Astrocyte of the cerebellum (primary cell): ENCODE measurements at regions of chr11 and their contacts with region 1.

Region 1: DNA sequence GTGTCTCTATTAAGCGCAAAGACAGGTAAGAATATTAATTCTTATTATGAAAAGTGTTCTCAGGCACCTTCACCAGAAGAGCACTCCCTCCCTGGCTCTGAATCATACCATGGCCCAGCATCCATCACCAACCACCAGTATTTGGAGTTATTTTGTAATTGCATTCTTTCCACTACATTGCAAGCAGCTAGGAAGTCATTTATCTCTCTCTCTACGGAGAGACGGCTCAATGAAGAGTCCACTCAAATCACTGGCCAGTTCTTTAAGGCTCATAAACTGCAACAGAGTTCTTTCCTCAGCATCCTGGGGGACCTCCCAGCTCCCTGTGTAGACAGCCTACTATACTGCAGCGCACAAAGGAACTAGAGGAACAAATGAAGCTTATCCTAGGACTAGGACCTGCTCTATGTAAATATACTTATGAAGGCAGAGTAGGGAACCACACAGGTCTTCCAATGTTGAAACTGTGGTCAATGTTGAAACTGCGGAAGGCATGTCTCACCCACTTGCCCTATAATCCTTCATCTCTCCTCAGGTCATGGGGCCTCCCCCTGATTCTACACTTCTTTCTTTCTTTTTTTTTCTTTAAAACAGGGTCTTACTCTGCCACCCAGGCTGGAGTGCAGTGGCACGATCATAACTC is 63.4 kb downstream of the AAMDC start:
- DNase-seq: peak; percentile 27
- H3K4me3 ChIP-seq: no peak overlapping the region
- CTCF ChIP-seq: no peak

Region 2: GRCh38 chr11:77813256-77813655 is 71.1 kb before region 1 on chr11:
- in situ Hi-C with region 1: loop called (anchors 5 kb)
- DNase-seq: peak; percentile 32
- H3K4me3 ChIP-seq: no peak overlapping the region
- CTCF ChIP-seq: no peak

Region 3: GRCh38 chr11:77994412-77995362 is 110.4 kb after region 1 on chr11 and contains the start of gene INTS4:
- in situ Hi-C with region 1: loop called (anchors 5 kb)
- DNase-seq: peak; percentile 99
- H3K4me3 ChIP-seq: peak within 1 kb of the TSS; percentile 91
- CTCF ChIP-seq: no peak